Heart right ventricle (tissue), 16 donors: ENCODE measurements at regions of chr13 and their contacts with region 1.

Region 1: GRCh38 chr13:39510316-39510695 is 92.7 kb downstream of the LHFPL6 start:
- DNase-seq: no peak
- ATAC-seq: no peak
- H3K4me3 ChIP-seq: no peak overlapping the region
- H3K27ac ChIP-seq: peak overlapping the region in 2 of 10 donors; percentile 3 to 5
- H3K4me1 ChIP-seq: peaks cover 5 to 67% (median 38%) of the 10 kb centered on the region in 9 donors
- H3K27me3 ChIP-seq: no peaks in the 10 kb centered on the region
- CTCF ChIP-seq: no peak

Region 2: GRCh38 chr13:39321574-39321973 is 188.7 kb before region 1 on chr13:
- intact Hi-C with region 1: no loop called
- DNase-seq: no peak
- ATAC-seq: peak in 5 of 8 donors; percentile 27 to 79 (median 60)
- H3K4me3 ChIP-seq: no peak overlapping the region
- H3K27ac ChIP-seq: peak overlapping the region in 2 of 10 donors; percentile 13 to 42
- H3K4me1 ChIP-seq: peaks cover 0 to 71% (median 46%) of the 10 kb centered on the region in 9 donors
- H3K27me3 ChIP-seq: no peaks in the 10 kb centered on the region
- CTCF ChIP-seq: no peak

Region 3: GRCh38 chr13:39462428-39462827 is 47.9 kb before region 1 on chr13:
- intact Hi-C with region 1: loop called in 2 of 10 experiments (anchors 5 to 10 kb)
- DNase-seq: no peak
- ATAC-seq: peak; percentile 59 to 84 (median 80)
- H3K4me3 ChIP-seq: peak overlapping the region in 4 of 10 donors; percentile 9 to 18 (median 16)
- H3K27ac ChIP-seq: peak overlapping the region in 9 of 10 donors; percentile 9 to 81 (median 71)
- H3K4me1 ChIP-seq: peaks cover 11 to 83% (median 51%) of the 10 kb centered on the region in 9 donors
- H3K27me3 ChIP-seq: no peaks in the 10 kb centered on the region
- CTCF ChIP-seq: no peak

Region 4: GRCh38 chr13:39538816-39539790 is 28.8 kb after region 1 on chr13:
- intact Hi-C with region 1: no loop called
- DNase-seq: no peak
- ATAC-seq: no peak
- H3K4me3 ChIP-seq: no peak overlapping the region
- H3K27ac ChIP-seq: no peak overlapping the region
- H3K4me1 ChIP-seq: peaks cover 7 to 85% (median 62%) of the 10 kb centered on the region in 9 donors
- H3K27me3 ChIP-seq: no peaks in the 10 kb centered on the region
- CTCF ChIP-seq: no peak

Region 5: DNA sequence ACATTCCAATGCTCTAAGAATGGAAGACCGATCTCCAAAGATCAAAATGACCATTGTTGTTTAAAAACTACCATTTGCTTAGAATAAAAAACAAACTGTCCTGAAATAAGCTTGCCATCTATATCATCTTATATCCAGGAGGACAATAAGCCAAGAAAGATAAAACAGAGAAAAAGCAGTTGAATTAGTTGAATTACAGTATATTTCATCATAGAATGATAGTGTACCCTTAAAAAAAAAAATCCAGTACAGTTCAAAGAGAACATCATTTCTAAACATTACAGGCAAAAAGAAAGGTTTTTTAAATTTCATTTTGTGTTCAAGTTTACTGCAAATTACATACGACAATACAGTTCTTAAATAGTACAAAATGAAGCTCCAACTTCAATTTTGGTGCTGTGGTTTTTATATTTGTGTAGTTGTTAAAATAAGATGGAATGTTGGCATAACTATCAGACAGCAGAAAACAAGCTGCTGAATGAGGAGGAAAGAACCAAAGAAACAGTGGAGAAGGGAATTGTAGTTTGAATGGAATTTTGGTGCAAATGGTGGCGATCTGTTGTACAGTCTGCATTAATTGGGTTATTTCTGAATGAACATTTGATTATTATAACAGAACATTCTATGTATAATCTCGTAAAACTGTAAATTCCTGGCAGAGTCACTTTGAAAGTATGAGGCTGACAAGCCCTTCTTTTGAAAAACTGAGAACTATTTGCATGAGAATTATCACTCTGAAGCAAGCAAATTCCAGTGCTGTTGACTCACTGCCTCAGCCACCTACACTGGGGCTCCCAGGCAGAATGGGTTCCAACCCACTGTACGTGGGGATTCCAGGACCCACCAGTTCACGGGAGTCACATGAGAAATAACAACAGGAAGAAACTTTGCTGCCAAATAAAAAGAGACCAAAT is 55.0 kb after region 1 on chr13:
- intact Hi-C with region 1: loop called in 2 of 10 experiments (anchors 10 kb)
- DNase-seq: no peak
- ATAC-seq: peak in 5 of 8 donors; percentile 66 to 81 (median 69)
- H3K4me3 ChIP-seq: no peak overlapping the region
- H3K27ac ChIP-seq: peak overlapping the region in 8 of 10 donors; percentile 3 to 74 (median 42)
- H3K4me1 ChIP-seq: peaks cover 12 to 74% (median 47%) of the 10 kb centered on the region in 9 donors
- H3K27me3 ChIP-seq: no peaks in the 10 kb centered on the region
- CTCF ChIP-seq: no peak

Region 6: GRCh38 chr13:39577838-39578491 is 67.7 kb after region 1 on chr13:
- intact Hi-C with region 1: loop called in 2 of 10 experiments (anchors 10 kb)
- DNase-seq: peak in 1 of 2 donors; percentile 67
- ATAC-seq: peak in 6 of 8 donors; percentile 43 to 69 (median 52)
- H3K4me3 ChIP-seq: no peak overlapping the region
- H3K27ac ChIP-seq: peak overlapping the region in 8 of 10 donors; percentile 11 to 71 (median 38)
- H3K4me1 ChIP-seq: peaks cover 3 to 87% (median 55%) of the 10 kb centered on the region in 9 donors
- H3K27me3 ChIP-seq: no peaks in the 10 kb centered on the region
- CTCF ChIP-seq: no peak

Region 7: GRCh38 chr13:39586151-39586550 is 75.8 kb after region 1 on chr13:
- intact Hi-C with region 1: loop called in 1 of 10 experiments (anchors 10 kb)
- DNase-seq: no peak
- ATAC-seq: no peak
- H3K4me3 ChIP-seq: no peak overlapping the region
- H3K27ac ChIP-seq: peak overlapping the region in 2 of 10 donors; percentile 6 to 26
- H3K4me1 ChIP-seq: peaks cover 0 to 97% (median 59%) of the 10 kb centered on the region in 9 donors
- H3K27me3 ChIP-seq: no peaks in the 10 kb centered on the region
- CTCF ChIP-seq: no peak